Sigmoid colon (tissue), 7 donors: ENCODE measurements at regions of chr4 and their contacts with region 1.

Region 1: GRCh38 chr4:153573881-153574802 is 108.0 kb downstream of the TMEM131L start:
- DNase-seq: peak; percentile 84
- H3K4me3 ChIP-seq: no peak overlapping the region
- H3K27ac ChIP-seq: peak overlapping the region; percentile 39 to 62 (median 52)
- H3K4me1 ChIP-seq: peaks cover 0 to 38% (median 23%) of the 10 kb centered on the region in 4 donors
- H3K27me3 ChIP-seq: no peaks in the 10 kb centered on the region
- CTCF ChIP-seq: peak; percentile 46 to 58 (median 52)
- EP300 ChIP-seq: no peak
- POLR2A ChIP-seq: no peak

Region 2: DNA sequence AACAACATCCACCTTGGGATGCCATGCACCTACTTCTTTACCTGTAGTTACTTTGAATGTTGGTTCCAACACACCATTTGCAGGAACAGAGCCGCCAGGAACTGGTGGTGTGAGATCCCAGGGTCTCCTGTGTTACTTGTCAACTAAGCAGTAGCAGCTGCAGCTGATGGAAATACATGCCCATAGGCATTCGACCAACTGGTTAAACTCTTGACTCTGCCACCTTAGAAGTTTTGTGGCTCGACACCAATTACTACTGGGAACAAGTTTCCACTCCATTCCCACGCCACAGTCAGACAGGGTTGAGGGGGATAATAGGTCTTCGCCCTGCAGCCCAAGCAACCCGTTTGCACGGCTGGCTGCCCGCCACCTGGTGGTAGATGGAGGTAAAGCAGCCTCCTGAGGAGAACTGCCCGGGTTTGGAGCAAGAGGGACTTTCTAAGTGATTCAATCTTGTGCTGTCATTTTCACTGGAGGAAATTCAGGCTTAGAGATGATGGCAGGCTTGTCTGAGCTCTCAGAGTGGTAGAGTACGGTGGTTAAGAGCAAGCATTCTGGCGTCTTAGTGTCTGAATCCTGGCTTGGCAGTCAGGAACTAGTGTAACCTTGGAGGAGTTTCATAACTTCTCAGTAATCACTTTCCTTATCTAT is 489.0 kb before region 1 on chr4:
- intact Hi-C with region 1: no loop called
- DNase-seq: peak; percentile 84
- H3K4me3 ChIP-seq: no peak overlapping the region
- H3K27ac ChIP-seq: no peak overlapping the region
- H3K4me1 ChIP-seq: peaks cover 0 to 10% (median 3%) of the 10 kb centered on the region in 4 donors
- H3K27me3 ChIP-seq: no peaks in the 10 kb centered on the region
- CTCF ChIP-seq: peak; percentile 62 to 97 (median 90)
- EP300 ChIP-seq: no peak
- POLR2A ChIP-seq: no peak

Region 3: DNA sequence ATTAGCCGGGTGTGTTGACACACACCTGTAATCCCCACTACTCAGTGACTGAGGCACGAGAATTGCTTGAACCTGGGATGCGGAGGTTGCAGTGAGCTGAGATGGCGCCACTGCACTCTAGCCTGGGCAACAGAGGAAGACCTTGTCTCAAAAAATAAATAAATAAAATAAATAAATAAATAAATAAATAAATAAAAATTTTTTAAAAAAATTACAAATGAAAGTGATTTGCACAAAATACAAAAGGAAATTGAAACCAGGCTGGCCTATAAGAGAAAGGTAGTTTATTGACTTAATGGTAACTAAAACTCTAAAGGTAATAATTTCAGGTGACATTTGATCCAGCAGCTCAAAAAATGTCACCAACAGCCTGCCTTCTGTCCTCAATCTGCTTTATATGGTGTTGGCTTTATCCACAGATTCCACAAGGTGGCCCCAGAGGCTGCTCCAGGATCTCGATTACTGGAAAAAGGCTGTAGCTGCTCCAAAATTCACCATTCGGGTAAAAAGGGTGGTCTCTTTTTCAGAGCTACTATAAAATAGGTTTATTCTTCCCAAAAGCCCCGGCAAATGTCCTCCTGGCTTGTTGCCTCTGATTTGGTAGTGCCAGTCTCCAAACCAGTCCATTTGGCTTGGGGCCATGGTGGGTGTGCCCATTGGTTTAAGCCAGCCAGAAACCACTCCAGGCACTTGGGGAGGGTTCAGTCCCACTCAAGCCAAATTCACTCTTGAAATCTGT is 431.3 kb before region 1 on chr4:
- intact Hi-C with region 1: loop called (anchors 2 kb)
- DNase-seq: peak; percentile 82
- H3K4me3 ChIP-seq: peak overlapping the region in 2 of 4 donors; percentile 9 to 19
- H3K27ac ChIP-seq: no peak overlapping the region
- H3K4me1 ChIP-seq: peaks cover 0 to 14% (median 4%) of the 10 kb centered on the region in 4 donors
- H3K27me3 ChIP-seq: no peaks in the 10 kb centered on the region
- CTCF ChIP-seq: peak; percentile 50 to 85 (median 82)
- EP300 ChIP-seq: no peak
- POLR2A ChIP-seq: no peak

Region 4: DNA sequence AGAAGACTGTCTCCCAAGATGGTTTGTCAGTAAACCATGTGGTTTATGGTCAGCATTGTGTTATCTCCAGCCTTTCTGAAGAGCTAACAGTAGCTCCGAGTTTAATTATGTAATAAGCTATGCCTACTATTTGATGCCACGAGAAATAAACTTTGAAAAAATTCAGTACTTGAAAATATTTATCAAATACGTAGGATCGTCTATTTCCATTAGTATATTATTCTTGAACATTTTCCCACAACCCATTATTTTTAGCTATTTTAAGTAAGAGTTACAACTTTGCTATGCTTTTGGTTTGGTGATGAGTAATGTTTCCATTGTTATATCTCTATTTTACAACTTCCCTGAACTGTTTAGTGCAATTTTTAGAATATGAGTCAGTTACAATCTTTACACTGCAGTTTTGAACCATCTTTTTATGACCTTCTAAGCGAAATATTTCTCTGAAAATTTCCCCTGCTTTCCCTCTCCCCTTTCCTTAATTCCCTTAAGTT is 414.4 kb before region 1 on chr4:
- intact Hi-C with region 1: no loop called
- DNase-seq: no peak
- H3K4me3 ChIP-seq: no peak overlapping the region
- H3K27ac ChIP-seq: no peak overlapping the region
- H3K4me1 ChIP-seq: no peaks in the 10 kb centered on the region
- H3K27me3 ChIP-seq: no peaks in the 10 kb centered on the region
- CTCF ChIP-seq: no peak
- EP300 ChIP-seq: no peak
- POLR2A ChIP-seq: no peak

Region 5: GRCh38 chr4:153344131-153345010 is 229.8 kb before region 1 on chr4 and contains the start of gene MND1:
- intact Hi-C with region 1: loop called (anchors 1 kb)
- DNase-seq: peak; percentile 88
- H3K4me3 ChIP-seq: peak within 1 kb of the TSS; percentile 61 to 91 (median 84)
- H3K27ac ChIP-seq: peak within 1 kb of the TSS; percentile 4 to 75 (median 40)
- H3K4me1 ChIP-seq: peaks cover 0 to 11% (median 8%) of the 10 kb centered on the region in 4 donors
- H3K27me3 ChIP-seq: no peaks in the 10 kb centered on the region
- CTCF ChIP-seq: peak; percentile 50 to 99 (median 70)
- EP300 ChIP-seq: no peak
- POLR2A ChIP-seq: no peak
- total RNA-seq, gene MND1: 2.4 TPM in 1 of 4 donors, not detected in the others

Region 6: DNA sequence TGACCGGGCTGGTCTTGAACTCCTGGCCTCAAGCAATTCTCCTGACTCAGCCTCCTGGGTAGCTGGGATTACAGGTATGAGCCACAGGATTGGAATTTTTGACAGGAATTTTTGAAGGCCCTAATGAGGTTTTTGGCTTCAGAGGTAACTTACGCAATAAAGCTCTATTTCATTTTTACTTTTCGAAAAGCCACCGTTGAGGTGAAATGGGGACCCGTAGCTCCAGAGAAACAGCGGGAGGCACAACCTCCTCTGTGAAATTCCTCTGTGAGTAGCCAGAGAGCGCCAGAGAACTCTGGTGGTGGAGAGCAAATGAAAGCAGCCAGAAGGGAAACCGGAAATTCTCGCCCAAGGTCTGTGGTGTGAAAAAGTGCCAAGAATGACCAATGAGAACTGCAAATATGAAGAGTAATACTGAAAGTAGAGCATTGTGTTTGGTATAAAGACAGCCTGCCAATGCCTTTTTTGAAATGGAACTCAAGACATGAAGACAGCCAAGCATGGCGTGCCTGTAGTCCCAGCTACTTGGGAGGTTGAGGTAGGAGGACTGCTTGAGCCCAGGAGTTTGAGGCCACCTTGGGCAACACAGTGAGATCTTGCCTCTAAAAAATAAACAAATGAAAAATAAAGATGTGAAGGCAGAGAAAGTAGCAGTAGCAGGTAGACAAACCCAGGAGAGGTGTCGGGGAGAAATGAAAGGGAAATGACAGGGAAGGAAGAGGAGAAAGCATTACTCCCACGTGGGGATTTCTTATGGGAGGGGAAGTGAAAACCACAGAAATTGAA is 141.0 kb before region 1 on chr4:
- intact Hi-C with region 1: loop called (anchors 5 kb)
- DNase-seq: peak; percentile 74
- H3K4me3 ChIP-seq: no peak overlapping the region
- H3K27ac ChIP-seq: peak overlapping the region in 2 of 4 donors; percentile 39
- H3K4me1 ChIP-seq: peaks cover 0 to 22% (median 18%) of the 10 kb centered on the region in 4 donors
- H3K27me3 ChIP-seq: no peaks in the 10 kb centered on the region
- CTCF ChIP-seq: peak in 3 of 4 experiments; percentile 7 to 49 (median 41)
- EP300 ChIP-seq: no peak
- POLR2A ChIP-seq: no peak

Region 7: DNA sequence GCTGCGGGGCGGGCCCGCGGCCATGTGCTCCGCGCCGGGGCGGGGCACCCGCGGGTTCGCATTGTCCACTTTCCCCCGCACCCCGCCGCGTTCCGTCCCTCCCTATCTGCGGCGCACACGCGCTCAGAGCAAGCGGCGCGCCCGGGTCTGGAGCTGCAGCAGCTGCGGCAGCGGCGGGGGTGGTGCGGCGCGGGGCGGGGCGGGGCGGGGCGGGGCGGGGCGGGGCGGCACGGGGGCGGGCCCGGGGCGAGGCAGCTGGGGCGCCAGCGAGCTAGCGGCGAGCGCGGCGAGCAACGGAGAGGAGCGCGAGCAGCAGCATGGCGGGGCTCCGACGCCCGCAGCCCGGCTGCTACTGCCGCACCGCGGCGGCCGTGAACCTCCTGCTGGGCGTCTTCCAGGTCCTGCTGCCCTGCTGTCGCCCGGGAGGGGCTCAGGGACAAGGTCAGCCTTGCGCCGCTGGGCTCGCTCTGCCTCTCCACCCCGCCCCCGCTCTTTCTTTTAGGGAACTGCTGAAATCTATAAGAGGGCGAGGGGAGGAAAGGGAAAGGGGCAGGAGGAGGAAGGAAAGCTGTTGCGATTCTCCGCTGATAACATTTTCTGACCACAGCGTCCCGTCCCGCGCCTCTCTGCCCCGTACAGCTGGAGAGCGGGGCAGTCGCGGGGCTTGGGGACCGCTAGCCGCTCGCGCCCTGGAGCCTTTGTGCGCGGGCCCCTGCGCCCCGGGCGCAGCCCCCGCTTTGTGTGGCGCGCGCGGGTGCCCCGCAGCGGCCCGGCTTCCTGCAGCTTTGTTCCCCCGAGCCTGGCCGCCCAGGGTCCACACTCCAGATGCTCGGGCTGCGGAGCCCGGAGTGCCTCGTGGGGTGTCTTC is 107.8 kb before region 1 on chr4 and contains the start of gene TMEM131L:
- intact Hi-C with region 1: loop called (anchors 1 kb)
- DNase-seq: peak; percentile 83
- H3K4me3 ChIP-seq: peak within 1 kb of the TSS; percentile 80 to 98 (median 86)
- H3K27ac ChIP-seq: peak within 1 kb of the TSS; percentile 83 to 89 (median 86)
- H3K4me1 ChIP-seq: peaks cover 0 to 63% (median 44%) of the 10 kb centered on the region in 4 donors
- H3K27me3 ChIP-seq: no peaks in the 10 kb centered on the region
- CTCF ChIP-seq: peak in 1 of 4 experiments; percentile 8
- EP300 ChIP-seq: no peak
- POLR2A ChIP-seq: no peak
- total RNA-seq, gene TMEM131L: 8.2 to 27.2 (median 15.6) TPM

Region 8: GRCh38 chr4:153535772-153536513 is 38.2 kb before region 1 on chr4:
- intact Hi-C with region 1: loop called (anchors 5 kb)
- DNase-seq: no peak
- H3K4me3 ChIP-seq: no peak overlapping the region
- H3K27ac ChIP-seq: no peak overlapping the region
- H3K4me1 ChIP-seq: peaks cover 0 to 60% (median 33%) of the 10 kb centered on the region in 4 donors
- H3K27me3 ChIP-seq: no peaks in the 10 kb centered on the region
- CTCF ChIP-seq: no peak
- EP300 ChIP-seq: no peak
- POLR2A ChIP-seq: no peak

Region 9: DNA sequence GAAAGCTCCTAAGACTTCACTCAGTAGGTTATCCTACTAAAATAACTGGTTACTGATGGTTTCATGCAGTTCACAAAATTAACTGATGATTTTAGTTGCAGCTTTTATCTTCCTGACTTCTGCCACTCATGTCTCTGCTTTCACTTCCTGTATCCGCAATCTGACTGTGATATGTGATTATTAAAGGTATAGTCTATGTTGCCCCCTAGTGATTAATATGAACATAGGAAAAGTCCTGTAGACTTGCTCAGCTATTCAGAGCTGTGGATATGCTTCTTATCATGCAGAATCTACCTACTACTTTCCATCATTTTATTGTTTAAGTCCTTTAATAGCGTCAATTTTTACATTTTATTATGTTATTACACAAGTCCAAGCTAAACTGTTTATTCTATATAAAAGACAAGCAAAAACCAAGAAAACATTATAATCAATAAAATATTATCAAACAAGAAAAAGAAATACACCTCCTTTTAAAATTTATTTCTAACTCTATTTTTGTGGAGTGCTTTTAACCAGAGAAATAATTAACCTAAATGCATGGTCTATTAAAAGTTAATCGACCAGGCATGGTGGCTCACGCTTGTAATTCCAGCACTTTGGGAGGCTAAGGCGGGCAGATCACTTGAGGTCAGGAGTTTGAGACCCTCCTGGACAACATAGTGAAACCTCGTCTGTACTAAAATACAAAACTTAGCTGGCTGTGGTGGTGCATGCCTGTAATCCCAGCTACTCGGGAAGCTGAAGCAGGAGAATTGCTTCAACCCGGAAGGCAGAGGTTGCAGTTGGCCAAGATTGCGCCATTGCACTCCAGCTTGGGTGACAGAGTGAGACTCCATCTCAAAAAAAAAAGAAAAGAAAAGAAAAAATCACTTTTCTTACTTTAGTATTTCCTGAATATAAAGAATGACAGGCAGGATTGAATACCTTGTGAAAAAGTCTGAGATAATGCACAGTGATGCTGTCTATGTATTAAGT is 69.6 kb after region 1 on chr4:
- intact Hi-C with region 1: loop called (anchors 10 kb)
- DNase-seq: no peak
- H3K4me3 ChIP-seq: no peak overlapping the region
- H3K27ac ChIP-seq: no peak overlapping the region
- H3K4me1 ChIP-seq: no peaks in the 10 kb centered on the region
- H3K27me3 ChIP-seq: no peaks in the 10 kb centered on the region
- CTCF ChIP-seq: peak; percentile 28 to 47 (median 38)
- EP300 ChIP-seq: no peak
- POLR2A ChIP-seq: no peak